CD8-positive, alpha-beta T cell (primary cell): ENCODE measurements at regions of chr17 and their contacts with region 1.

Region 1: DNA sequence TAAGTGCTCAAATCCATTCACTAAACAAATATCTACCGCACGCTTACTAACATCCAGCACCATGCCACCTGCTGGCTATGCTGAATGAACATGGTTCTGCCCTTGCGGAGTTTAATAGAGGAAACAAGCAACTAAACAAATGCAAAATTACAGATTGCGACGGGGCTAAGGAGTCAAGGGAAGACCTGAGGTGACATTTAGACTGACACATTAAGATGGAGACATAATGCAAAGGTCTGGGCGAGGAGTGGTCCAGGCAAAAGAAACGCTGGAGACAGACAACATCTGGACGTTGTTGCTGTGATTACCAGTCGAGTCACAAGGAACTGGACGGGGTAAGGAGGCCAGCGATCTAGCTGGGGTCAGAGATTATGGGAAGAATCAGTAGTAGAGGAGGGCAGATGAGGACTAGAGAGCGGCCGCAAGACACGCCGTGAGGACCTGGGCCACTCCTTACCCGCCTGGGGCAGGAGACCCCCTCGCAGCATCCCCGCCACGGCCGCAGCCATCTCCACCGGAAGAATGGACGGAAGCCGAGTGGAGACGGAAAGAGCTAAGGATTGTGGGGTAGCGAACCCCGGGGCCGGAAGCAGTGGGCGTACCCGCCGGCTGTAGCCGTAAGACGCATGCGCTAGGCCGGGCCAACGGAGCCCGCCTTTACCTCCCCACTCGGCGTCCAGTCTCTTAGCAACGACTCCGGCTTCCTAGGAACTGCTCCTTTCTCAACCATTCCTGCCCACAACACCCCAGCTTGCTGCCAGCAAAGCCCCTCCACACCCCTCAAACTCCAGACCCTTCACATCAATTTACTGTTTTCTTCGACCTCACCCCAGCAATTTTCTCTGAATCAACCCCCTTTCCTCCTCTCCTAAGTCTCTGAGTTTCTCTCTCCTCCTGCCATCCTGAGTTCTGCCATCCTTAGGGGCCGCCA is at the starts of genes LRRC46 and MRPL10:
- DNase-seq: peak; percentile 80 to 96 (median 91)
- ATAC-seq: peak; percentile 71
- H3K4me3 ChIP-seq: peak within 1 kb of the TSS; percentile 87 to 95
- H3K4me3 Mint-ChIP-seq: peak within 1 kb of the TSS; percentile 91
- H3K27ac ChIP-seq: peak within 1 kb of the TSS; percentile 84 to 96
- H3K27ac Mint-ChIP-seq: peak within 1 kb of the TSS; percentile 98
- H3K4me1 ChIP-seq: peaks cover 30% of the 10 kb centered on the region
- H3K4me1 Mint-ChIP-seq: peaks cover 51% of the 10 kb centered on the region
- H3K27me3 ChIP-seq: no peaks in the 10 kb centered on the region
- H3K27me3 Mint-ChIP-seq: no peaks in the 10 kb centered on the region
- CTCF ChIP-seq: peak; percentile 36
- total RNA-seq, gene LRRC46: 0.43 to 1.5 TPM
- total RNA-seq, gene MRPL10: 67.5 to 69.7 TPM

Region 2: GRCh38 chr17:47649153-47649971 is 181.9 kb before region 1 on chr17 and contains the start of gene KPNB1:
- CTCF ChIA-PET with region 1: no interaction called
- POLR2A ChIA-PET with region 1: no interaction called
- intact Hi-C with region 1: loop called in 1 of 2 experiments (anchors 1 kb)
- DNase-seq: peak; percentile 94 to 99 (median 97)
- ATAC-seq: peak; percentile 82
- H3K4me3 ChIP-seq: peak within 1 kb of the TSS; percentile 70 to 89
- H3K4me3 Mint-ChIP-seq: peak within 1 kb of the TSS; percentile 100
- H3K27ac ChIP-seq: peak within 1 kb of the TSS; percentile 75 to 90
- H3K27ac Mint-ChIP-seq: peak within 1 kb of the TSS; percentile 99
- H3K4me1 ChIP-seq: peaks cover 41% of the 10 kb centered on the region
- H3K4me1 Mint-ChIP-seq: peaks cover 51% of the 10 kb centered on the region
- H3K27me3 ChIP-seq: no peaks in the 10 kb centered on the region
- H3K27me3 Mint-ChIP-seq: no peaks in the 10 kb centered on the region
- CTCF ChIP-seq: no peak
- total RNA-seq, gene KPNB1: 170 to 173 TPM

Region 3: GRCh38 chr17:47663912-47664625 is 167.2 kb before region 1 on chr17:
- CTCF ChIA-PET with region 1: no interaction called
- POLR2A ChIA-PET with region 1: no interaction called
- intact Hi-C with region 1: no loop called
- DNase-seq: peak; percentile 30 to 82 (median 62)
- ATAC-seq: peak; percentile 66
- H3K4me3 ChIP-seq: no peak overlapping the region
- H3K4me3 Mint-ChIP-seq: no peak overlapping the region
- H3K27ac ChIP-seq: peak overlapping the region in 1 of 2 experiments; percentile 6
- H3K27ac Mint-ChIP-seq: peak overlapping the region; percentile 66
- H3K4me1 ChIP-seq: peaks cover 13% of the 10 kb centered on the region
- H3K4me1 Mint-ChIP-seq: peaks cover 19% of the 10 kb centered on the region
- H3K27me3 ChIP-seq: no peaks in the 10 kb centered on the region
- H3K27me3 Mint-ChIP-seq: no peaks in the 10 kb centered on the region
- CTCF ChIP-seq: peak; percentile 88

Region 4: DNA sequence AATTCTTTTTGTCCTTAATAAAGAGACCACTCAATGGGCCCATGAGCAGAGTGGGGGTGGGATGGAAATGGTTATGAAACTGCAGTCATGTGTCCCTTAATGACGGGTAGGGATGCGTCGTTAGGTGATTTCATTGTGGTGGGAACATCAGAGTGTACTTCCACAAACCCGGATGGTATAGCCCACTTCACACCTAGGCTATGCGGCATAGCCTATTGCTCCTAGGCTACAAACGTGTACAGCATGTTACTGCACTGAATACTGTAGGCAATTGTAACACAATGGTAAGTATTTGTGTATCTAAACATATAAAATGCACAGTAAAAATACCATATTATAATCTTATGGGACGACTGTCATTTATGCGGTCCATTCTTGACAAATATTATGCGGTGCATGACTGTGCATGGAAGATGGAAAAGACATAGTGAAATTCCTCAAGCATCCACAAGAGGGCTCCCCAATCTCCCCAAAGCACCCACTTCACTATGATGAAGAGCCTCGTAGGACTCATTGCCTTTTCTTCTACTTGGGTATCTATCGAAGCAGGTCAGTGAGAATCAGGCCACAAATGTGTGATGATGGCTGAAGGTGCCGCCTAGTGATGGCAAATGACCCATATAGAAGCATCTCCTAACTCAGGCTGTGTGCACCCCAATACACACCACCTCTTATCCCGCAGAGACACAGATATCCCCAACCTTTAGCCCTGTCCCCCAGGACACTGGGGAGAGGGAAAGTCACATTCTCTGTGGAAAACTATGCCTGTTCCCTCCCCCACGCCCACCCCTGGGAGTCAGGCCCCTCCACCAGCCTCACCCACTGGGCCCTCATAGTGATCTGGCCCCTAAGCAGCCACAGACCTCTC is 54.7 kb before region 1 on chr17:
- CTCF ChIA-PET with region 1: no interaction called
- POLR2A ChIA-PET with region 1: no interaction called
- intact Hi-C with region 1: no loop called
- DNase-seq: peak in 6 of 9 experiments; percentile 24 to 73 (median 32)
- ATAC-seq: peak; percentile 96
- H3K4me3 ChIP-seq: no peak overlapping the region
- H3K4me3 Mint-ChIP-seq: no peak overlapping the region
- H3K27ac ChIP-seq: no peak overlapping the region
- H3K27ac Mint-ChIP-seq: no peak overlapping the region
- H3K4me1 ChIP-seq: no peaks in the 10 kb centered on the region
- H3K4me1 Mint-ChIP-seq: peaks cover 3% of the 10 kb centered on the region
- H3K27me3 ChIP-seq: peaks cover 8 to 11% of the 10 kb centered on the region in 2 experiments
- H3K27me3 Mint-ChIP-seq: peaks cover 41% of the 10 kb centered on the region
- CTCF ChIP-seq: peak; percentile 88

Region 5: DNA sequence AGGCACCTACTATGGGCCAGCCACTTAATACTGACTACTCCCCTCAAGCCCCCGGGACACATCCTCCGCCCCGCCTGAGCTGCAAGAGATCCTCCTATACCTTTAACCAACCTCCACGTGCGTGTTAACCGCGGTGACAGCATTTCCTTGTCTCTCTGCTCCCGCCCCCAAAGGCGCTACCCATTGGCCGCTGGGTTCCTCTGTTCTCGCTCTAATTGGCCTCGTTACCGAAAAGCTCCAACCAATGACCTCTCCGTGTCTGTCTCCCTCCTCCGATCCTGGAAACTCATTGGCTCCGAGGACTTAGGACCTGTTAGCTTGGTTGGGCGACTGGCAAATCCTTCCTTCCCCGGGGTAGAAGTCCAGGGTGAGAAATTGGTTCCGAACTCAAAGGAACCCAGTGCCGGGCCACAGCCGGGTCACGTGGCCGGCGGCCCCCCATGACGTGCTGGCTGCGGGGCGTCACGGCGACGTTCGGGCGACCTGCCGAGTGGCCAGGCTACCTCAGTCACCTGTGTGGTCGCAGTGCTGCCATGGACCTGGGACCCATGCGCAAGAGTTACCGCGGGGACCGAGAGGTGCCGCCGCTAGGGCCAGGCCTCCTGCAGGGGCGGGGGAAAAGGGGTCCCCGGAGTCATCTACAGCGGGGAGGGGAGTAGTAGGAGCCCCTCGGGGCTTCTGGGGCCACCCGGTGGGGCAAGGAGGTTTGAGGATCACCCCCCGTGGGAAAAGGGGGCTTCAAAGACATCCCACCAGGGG is 110.1 kb after region 1 on chr17 and contains the start of gene PNPO:
- CTCF ChIA-PET with region 1: interaction called, 5 read pairs
- POLR2A ChIA-PET with region 1: no interaction called
- intact Hi-C with region 1: loop called in 1 of 2 experiments (anchors 1 kb)
- DNase-seq: peak; percentile 82 to 98 (median 92)
- ATAC-seq: peak; percentile 97
- H3K4me3 ChIP-seq: peak within 1 kb of the TSS; percentile 72 to 92
- H3K4me3 Mint-ChIP-seq: peak within 1 kb of the TSS; percentile 86
- H3K27ac ChIP-seq: peak within 1 kb of the TSS; percentile 57 to 88
- H3K27ac Mint-ChIP-seq: peak within 1 kb of the TSS; percentile 87
- H3K4me1 ChIP-seq: peaks cover 47% of the 10 kb centered on the region
- H3K4me1 Mint-ChIP-seq: peaks cover 54% of the 10 kb centered on the region
- H3K27me3 ChIP-seq: no peaks in the 10 kb centered on the region
- H3K27me3 Mint-ChIP-seq: no peaks in the 10 kb centered on the region
- CTCF ChIP-seq: no peak
- total RNA-seq, gene PNPO: 5.7 to 5.8 TPM